PC-9 (cell line): ENCODE measurements at regions of chr2 and their contacts with region 1.

Region 1: GRCh38 chr2:217510771-217511291 is 492.0 kb downstream of the TNS1 start:
- DNase-seq: peak; percentile 67 to 74
- H3K4me3 ChIP-seq: no peak overlapping the region
- H3K27ac ChIP-seq: no peak overlapping the region
- H3K4me1 ChIP-seq: peaks cover 16% of the 10 kb centered on the region
- H3K27me3 ChIP-seq: no peaks in the 10 kb centered on the region
- CTCF ChIP-seq: peak; percentile 86

Region 2: GRCh38 chr2:216698895-216699294 is 811.9 kb before region 1 on chr2:
- CTCF ChIA-PET with region 1: interaction called, 4 read pairs
- POLR2A ChIA-PET with region 1: no interaction called
- intact Hi-C with region 1: loop called (anchors 1 kb)
- DNase-seq: no peak
- H3K4me3 ChIP-seq: no peak overlapping the region
- H3K27ac ChIP-seq: no peak overlapping the region
- H3K4me1 ChIP-seq: 0 out of 2 replicates have a peak, but pooled peaks cover 3% of the 10 kb centered on the region
- H3K27me3 ChIP-seq: no peaks in the 10 kb centered on the region
- CTCF ChIP-seq: peak; percentile 67

Region 3: DNA sequence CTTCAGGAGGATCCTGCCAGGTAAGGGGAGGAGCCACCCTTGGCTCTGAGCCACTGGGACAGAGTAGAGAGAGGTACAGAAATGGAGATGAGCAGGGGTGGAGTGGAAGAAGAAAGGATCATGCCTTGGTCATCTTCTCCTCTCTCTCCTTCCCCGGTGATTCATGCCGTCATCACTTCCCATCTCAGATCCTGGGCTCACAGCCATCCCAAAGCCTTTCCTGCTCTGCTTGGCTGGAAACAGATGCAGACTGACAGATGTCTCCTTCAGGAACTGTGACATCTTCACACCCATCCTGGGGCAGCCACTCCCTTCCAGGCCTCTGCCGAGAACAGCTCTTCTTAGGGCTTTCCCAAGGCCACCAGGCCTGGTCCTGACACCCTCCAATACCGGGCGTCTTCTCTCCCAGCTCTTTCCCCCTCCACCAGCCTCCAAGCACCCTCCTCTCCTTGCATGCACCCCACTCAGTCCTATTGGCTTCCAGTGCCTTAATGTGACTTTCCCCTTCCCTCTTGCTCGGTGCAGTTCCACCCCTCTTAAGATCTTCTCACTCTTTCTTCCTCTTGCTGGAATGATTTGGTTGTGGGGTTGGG is 592.6 kb before region 1 on chr2:
- CTCF ChIA-PET with region 1: no interaction called
- POLR2A ChIA-PET with region 1: no interaction called
- intact Hi-C with region 1: no loop called
- DNase-seq: peak in 1 of 2 experiments; percentile 21
- H3K4me3 ChIP-seq: no peak overlapping the region
- H3K27ac ChIP-seq: no peak overlapping the region
- H3K4me1 ChIP-seq: 0 out of 2 replicates have a peak, but pooled peaks cover 8% of the 10 kb centered on the region
- H3K27me3 ChIP-seq: no peaks in the 10 kb centered on the region
- CTCF ChIP-seq: no peak

Region 4: DNA sequence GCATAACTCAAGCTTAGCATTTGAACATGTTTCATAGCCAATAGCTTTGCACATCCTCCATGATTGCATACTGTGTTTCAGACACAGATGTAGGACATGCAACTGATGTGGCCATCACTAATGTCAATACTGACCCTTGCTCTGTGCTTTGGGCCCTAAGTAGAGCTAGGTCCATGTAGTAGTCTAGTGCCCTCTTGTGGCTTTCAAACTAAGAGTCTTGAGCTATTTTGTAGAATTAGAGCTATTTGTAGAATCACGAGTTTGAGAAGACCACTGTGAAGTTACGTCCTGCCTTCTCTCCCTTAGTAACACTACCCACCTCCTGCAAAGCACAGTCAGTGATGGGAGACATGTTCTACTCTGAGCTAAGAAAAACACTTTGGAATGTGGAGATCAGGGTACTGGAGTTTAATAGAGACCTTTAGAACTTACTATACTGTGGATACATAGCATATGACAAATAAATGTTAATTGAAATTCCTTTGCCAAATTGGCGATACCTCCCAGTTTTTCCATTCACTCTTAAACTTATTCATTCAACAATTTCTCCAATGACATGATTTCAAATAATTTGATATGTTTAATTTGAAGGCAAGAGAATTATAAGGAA is 344.5 kb before region 1 on chr2:
- CTCF ChIA-PET with region 1: interaction called, 7 read pairs
- POLR2A ChIA-PET with region 1: no interaction called
- intact Hi-C with region 1: loop called (anchors 2 kb)
- DNase-seq: peak in 1 of 2 experiments; percentile 4
- H3K4me3 ChIP-seq: no peak overlapping the region
- H3K27ac ChIP-seq: no peak overlapping the region
- H3K4me1 ChIP-seq: peaks cover 14% of the 10 kb centered on the region; the same call in 1 of the 2 replicates
- H3K27me3 ChIP-seq: no peaks in the 10 kb centered on the region
- CTCF ChIP-seq: peak; percentile 67

Region 5: GRCh38 chr2:217301142-217301925 is 209.5 kb before region 1 on chr2:
- CTCF ChIA-PET with region 1: no interaction called
- POLR2A ChIA-PET with region 1: no interaction called
- intact Hi-C with region 1: no loop called
- DNase-seq: no peak
- H3K4me3 ChIP-seq: no peak overlapping the region
- H3K27ac ChIP-seq: no peak overlapping the region
- H3K4me1 ChIP-seq: no peaks in the 10 kb centered on the region
- H3K27me3 ChIP-seq: no peaks in the 10 kb centered on the region
- CTCF ChIP-seq: no peak

Region 6: DNA sequence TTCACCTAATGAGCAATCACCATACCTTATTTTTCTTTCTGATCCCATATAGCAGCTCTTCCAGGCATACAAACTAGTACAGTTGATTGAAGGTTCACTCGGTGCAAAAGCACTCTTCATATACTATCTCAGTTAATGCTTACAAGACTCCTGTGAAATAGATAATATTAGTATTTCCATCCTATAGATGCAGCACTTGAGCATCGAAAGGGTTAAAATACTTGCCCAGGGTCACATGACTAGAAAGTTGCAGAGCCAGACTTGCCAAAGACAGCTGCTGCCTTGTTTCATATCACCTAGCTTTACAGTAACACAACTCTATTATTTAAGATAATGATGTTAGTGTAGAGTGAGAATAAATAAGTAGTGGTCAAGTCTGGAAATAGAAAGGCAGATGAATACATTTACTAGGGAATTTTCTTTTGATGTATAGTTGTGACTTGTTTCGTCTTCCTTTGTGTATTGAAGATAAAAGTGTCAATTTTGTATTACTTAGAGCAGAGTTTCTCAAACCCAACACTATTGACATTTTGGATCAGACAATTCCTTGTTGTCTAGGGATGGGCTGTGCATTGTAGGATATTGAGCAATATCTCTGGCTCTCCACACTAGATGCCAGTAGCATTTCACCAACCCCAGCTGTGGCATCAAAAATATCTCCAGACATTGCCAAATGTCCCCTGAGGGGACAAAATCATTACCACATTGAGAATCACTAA is 184.9 kb before region 1 on chr2:
- CTCF ChIA-PET with region 1: no interaction called
- POLR2A ChIA-PET with region 1: interaction called, 4 read pairs
- intact Hi-C with region 1: loop called (anchors 1 kb)
- DNase-seq: no peak
- H3K4me3 ChIP-seq: no peak overlapping the region; the same call in 1 of the 2 replicates
- H3K27ac ChIP-seq: peak overlapping the region; percentile 67
- H3K4me1 ChIP-seq: peaks cover 62% of the 10 kb centered on the region
- H3K27me3 ChIP-seq: no peaks in the 10 kb centered on the region
- CTCF ChIP-seq: no peak

Region 7: GRCh38 chr2:217459680-217460405 is 51.0 kb before region 1 on chr2:
- CTCF ChIA-PET with region 1: no interaction called
- POLR2A ChIA-PET with region 1: no interaction called
- intact Hi-C with region 1: no loop called
- DNase-seq: no peak
- H3K4me3 ChIP-seq: no peak overlapping the region
- H3K27ac ChIP-seq: no peak overlapping the region
- H3K4me1 ChIP-seq: no peaks in the 10 kb centered on the region
- H3K27me3 ChIP-seq: no peaks in the 10 kb centered on the region
- CTCF ChIP-seq: no peak

Region 8: GRCh38 chr2:217636991-217637944 is 126.4 kb after region 1 on chr2:
- CTCF ChIA-PET with region 1: no interaction called
- POLR2A ChIA-PET with region 1: no interaction called
- intact Hi-C with region 1: no loop called
- DNase-seq: no peak
- H3K4me3 ChIP-seq: no peak overlapping the region
- H3K27ac ChIP-seq: no peak overlapping the region
- H3K4me1 ChIP-seq: no peaks in the 10 kb centered on the region
- H3K27me3 ChIP-seq: no peaks in the 10 kb centered on the region
- CTCF ChIP-seq: no peak

Region 9: GRCh38 chr2:217650716-217651360 is 140.0 kb after region 1 on chr2:
- CTCF ChIA-PET with region 1: no interaction called
- POLR2A ChIA-PET with region 1: no interaction called
- intact Hi-C with region 1: loop called (anchors 5 kb)
- DNase-seq: peak in 1 of 2 experiments; percentile 12
- H3K4me3 ChIP-seq: no peak overlapping the region
- H3K27ac ChIP-seq: no peak overlapping the region
- H3K4me1 ChIP-seq: peaks cover 15% of the 10 kb centered on the region
- H3K27me3 ChIP-seq: no peaks in the 10 kb centered on the region
- CTCF ChIP-seq: peak; percentile 66